ENCODE measurements at regions of chr22 and their contacts with region 1.

Region 1: DNA sequence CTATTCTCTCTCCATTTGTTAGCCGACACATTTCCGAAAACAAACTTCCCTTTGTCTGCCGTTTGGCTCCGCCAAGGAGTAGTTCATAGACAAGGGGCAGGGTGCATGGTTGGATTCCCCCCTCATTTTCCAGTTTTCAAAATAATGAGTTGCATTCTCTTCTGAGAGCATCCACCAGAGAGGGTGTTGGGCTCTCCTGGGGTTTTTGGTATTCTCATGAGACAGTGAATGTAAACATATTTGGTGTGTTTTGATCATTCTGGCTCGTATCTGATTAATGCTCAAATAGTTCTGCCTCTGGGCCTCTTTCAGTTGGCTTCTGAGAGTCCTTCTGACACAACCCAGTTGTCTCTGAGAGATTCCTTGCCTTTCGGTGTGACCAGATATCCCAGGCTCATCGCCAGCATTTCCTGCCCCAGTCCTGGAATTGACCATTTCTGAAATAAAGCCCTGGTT is 21.7 kb downstream of the GRAMD4 start:
- DNase-seq: no peak
- ATAC-seq: no peak
- H3K4me3 ChIP-seq: no peak overlapping the region
- H3K27ac ChIP-seq: no peak overlapping the region
- H3K4me1 ChIP-seq: peaks cover 14% of the 10 kb centered on the region
- H3K27me3 ChIP-seq: no peaks in the 10 kb centered on the region
- CTCF ChIP-seq: no peak
- POLR2A ChIP-seq: no peak

Region 2: DNA sequence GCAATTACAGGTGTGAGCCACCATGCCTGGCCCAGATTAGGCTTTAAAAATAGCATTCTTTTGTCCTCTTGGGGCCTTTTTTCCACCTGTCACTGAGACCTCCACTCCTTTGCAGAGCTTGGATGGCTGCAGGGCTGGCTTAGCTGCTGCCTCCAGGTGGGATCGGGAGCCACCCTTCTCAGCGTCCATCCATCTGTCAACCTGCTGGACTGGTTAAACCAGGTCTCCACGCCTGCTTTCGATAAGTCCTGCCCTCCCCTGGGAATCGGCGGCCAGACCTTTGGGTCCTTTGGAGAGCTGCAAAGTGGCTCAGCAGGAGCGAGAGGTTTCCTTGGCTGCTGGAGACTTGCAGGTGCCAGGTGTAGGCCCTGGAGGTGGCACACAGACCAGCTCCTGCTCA is 45.0 kb before region 1 on chr22:
- intact Hi-C with region 1: loop called (anchors 5 kb)
- DNase-seq: peak; percentile 92 to 96 (median 96)
- ATAC-seq: peak; percentile 94
- H3K4me3 ChIP-seq: no peak overlapping the region
- H3K27ac ChIP-seq: peak overlapping the region; percentile 62 to 78 (median 65)
- H3K4me1 ChIP-seq: peaks cover 33% of the 10 kb centered on the region
- H3K27me3 ChIP-seq: no peaks in the 10 kb centered on the region
- CTCF ChIP-seq: peak; percentile 32 to 72 (median 71)
- POLR2A ChIP-seq: peak in 1 of 3 donors; percentile 11

Measured in body of pancreas (tissue), 4 donors.